Dendritic cell treated with granulocyte-macrophage colony-stimulating factor and Interleukin-4, amounts not matched to agents 40 ng/mL and 50 ng/mL, for 4 days (primary cell): ENCODE measurements at regions of chr1 and their contacts with region 1.

Region 1: DNA sequence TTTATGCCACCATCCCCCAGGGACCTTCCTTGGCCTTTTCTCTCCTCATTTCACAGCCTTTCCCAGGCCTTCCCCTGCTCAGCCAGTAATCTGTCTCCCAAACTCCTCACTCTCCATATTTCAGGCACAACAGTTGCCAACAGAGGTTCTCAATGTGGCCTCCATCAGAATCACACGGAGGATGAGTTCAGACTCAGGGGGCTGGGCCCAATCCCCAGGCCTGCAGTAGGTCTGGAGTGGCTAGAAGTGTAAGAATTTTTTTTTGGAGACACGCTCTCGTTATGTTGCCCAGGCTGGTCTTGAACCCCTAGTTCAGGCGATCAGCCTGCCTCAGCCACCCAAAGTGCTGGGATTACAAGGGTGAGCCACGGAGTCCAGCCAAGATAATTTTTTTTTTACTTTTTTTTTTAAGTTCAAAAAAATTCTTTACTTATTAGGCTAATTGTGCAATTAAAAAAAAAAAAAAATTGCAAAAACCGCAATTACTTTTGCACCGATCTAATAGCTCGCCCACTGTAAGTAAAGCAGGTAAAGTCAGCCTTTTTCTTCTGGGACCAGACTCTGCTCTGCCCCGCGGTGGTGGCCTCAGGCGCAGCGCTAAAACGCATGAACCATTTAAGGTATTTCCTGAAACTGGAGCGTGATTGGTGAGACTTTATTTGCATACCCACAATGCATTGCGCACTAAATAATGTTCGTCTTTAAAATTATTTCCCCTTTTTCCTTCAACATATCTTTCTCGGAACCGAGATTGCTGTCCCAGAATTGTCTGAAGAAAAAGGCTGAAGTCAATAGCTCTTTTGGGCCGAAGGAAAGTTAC is 18.7 kb downstream of the KIAA2013 start:
- H3K4me3 Mint-ChIP-seq: peak overlapping the region; percentile 82
- H3K27ac Mint-ChIP-seq: peak overlapping the region; percentile 98
- H3K4me1 Mint-ChIP-seq: peaks cover 23% of the 10 kb centered on the region
- H3K27me3 Mint-ChIP-seq: peaks cover 4% of the 10 kb centered on the region

Region 2: GRCh38 chr1:11339346-11340232 is 567.9 kb before region 1 on chr1:
- intact Hi-C with region 1: no loop called
- H3K4me3 Mint-ChIP-seq: no peak overlapping the region
- H3K27ac Mint-ChIP-seq: no peak overlapping the region
- H3K4me1 Mint-ChIP-seq: no peaks in the 10 kb centered on the region
- H3K27me3 Mint-ChIP-seq: peaks cover 34% of the 10 kb centered on the region

Region 3: DNA sequence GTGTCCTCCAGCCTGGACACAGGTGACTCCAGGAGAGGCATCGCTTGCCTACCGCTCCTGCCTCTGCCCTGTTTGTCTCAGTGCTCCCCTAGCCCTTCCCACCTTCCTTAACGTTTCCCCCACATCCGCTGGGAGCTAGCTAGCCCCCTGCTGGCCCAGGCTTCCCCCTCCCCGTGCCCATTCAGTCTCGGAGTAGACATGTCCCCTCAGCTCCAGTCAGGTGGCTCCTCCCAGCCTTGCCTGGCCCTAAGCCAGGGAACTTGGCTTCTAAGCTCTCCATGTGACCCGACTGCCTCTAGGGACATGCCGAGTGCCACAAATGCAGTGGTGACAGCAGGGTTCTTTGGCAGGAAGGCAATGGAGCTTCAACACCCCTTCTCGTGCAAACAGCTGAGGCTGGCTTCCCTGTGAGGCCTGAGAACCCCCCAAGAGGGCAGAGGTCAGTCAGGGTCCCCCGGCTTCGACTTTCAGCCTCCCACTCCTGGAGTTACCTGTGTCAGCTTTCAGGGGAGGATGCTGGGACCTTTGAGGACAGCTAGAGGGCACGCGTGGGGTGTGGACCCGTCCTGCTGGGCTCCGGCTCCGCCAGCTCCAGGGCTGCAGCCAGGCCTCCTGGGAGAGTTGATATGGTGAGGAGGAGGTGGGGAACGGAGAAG is 199.7 kb before region 1 on chr1:
- intact Hi-C with region 1: no loop called
- H3K4me3 Mint-ChIP-seq: no peak overlapping the region
- H3K27ac Mint-ChIP-seq: no peak overlapping the region
- H3K4me1 Mint-ChIP-seq: peaks cover 25% of the 10 kb centered on the region
- H3K27me3 Mint-ChIP-seq: peaks cover 36% of the 10 kb centered on the region

Region 4: GRCh38 chr1:11790880-11791715 is 116.4 kb before region 1 on chr1:
- intact Hi-C with region 1: loop called (anchors 5 kb)
- H3K4me3 Mint-ChIP-seq: no peak overlapping the region
- H3K27ac Mint-ChIP-seq: peak overlapping the region; percentile 90
- H3K4me1 Mint-ChIP-seq: peaks cover 66% of the 10 kb centered on the region
- H3K27me3 Mint-ChIP-seq: peaks cover 1% of the 10 kb centered on the region

Region 5: DNA sequence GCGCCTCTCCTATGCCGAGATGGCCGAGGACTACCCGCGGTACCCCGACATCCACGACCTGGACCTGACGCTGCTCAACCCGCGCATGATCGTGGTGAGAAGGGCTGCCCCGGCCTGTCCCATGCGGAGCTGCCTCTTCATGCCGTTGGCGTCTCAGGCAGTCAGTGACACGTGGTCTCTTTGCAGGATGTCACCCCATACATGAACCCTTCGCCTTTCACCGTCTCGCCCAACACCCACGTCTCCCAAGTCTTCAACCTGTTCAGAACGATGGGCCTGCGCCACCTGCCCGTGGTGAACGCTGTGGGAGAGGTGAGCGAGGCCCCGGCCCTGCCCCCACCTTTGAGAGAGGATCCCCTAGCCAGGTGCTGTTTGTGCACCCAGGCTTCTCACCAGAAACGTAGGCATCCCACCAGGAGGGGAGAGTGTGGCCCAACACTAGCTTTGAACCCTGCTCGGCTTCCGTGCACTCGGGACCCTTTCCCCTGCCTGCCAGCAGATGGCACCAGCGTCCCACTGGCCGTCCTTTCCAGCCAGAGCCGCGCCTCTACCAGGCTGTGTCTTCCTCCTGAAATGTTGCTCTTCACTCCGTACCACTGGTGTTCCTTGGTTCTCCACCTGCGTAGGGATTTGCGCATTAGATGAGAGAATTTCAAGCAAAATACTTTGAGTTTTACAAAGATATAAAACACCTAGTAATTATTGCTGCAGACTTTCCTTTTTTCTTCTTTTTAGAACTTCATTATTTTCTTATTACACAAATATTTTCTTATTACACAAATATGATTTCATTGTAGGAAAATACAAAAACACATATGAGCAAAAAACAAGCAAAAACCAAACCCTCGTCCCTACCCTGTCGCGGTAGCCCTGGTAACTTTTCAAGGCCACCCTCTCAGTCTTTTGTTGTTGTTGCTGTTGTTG is 68.9 kb before region 1 on chr1:
- intact Hi-C with region 1: loop called (anchors 2 kb)
- H3K4me3 Mint-ChIP-seq: no peak overlapping the region
- H3K27ac Mint-ChIP-seq: peak overlapping the region; percentile 35
- H3K4me1 Mint-ChIP-seq: peaks cover 45% of the 10 kb centered on the region
- H3K27me3 Mint-ChIP-seq: no peaks in the 10 kb centered on the region

Region 6: DNA sequence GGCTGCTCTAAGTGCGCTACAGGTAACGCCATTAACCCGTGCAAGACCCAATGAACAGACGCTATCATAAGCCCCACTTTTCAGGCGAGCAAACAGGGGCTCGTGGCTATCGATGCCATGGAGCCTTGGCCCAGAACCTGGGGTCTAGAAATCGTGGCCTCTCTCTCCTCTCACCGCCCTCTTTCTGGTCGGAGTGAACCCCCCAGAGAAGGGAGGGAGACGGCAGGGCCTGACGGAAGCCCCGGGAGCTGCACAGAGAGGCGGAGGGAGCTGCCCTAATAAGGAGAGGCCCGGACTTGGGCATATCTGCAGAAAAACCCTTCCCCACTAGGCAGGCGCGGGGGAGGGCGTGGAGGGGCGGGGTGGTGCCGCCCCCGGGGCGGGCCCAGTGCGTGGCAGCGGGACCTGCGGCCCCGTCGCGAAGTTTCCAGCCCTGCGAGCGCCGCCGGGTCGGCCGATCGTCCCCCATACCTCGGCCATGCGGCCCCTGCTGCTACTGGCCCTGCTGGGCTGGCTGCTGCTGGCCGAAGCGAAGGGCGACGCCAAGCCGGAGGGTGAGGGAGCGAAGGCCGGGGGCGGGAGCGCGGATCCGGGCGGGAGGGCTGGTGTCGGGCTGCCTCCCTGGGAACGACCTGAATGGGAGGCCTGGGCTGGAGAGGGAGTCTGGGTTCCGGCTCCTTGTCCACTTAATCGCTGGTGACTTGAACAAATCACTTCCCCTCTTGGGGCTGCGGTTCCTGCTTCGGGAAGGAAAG is 27.0 kb after region 1 on chr1 and contains the start of gene PLOD1:
- intact Hi-C with region 1: no loop called
- H3K4me3 Mint-ChIP-seq: peak within 1 kb of the TSS; percentile 83
- H3K27ac Mint-ChIP-seq: peak within 1 kb of the TSS; percentile 85
- H3K4me1 Mint-ChIP-seq: peaks cover 43% of the 10 kb centered on the region
- H3K27me3 Mint-ChIP-seq: no peaks in the 10 kb centered on the region